B cell (primary cell): ENCODE measurements at regions of chr14 and their contacts with region 1.

Region 1: GRCh38 chr14:49867831-49868723 is 15.5 kb upstream of the NEMF start:
- DNase-seq: peak; percentile 98
- ATAC-seq: peak; percentile 87
- H3K4me3 ChIP-seq: peak overlapping the region; percentile 47 to 72 (median 62)
- H3K4me3 Mint-ChIP-seq: peak overlapping the region; percentile 91
- H3K27ac ChIP-seq: peak overlapping the region; percentile 89 to 96
- H3K27ac Mint-ChIP-seq: peak overlapping the region; percentile 99
- H3K4me1 ChIP-seq: peaks cover 60 to 66% of the 10 kb centered on the region in 2 donors
- H3K4me1 Mint-ChIP-seq: peaks cover 39% of the 10 kb centered on the region
- H3K27me3 ChIP-seq: no peaks in the 10 kb centered on the region
- H3K27me3 Mint-ChIP-seq: no peaks in the 10 kb centered on the region
- CTCF ChIP-seq: no peak

Region 2: GRCh38 chr14:49886523-49886922 is 18.4 kb after region 1 on chr14:
- CTCF ChIA-PET with region 1: interaction called, 49 read pairs
- POLR2A ChIA-PET with region 1: interaction called, 45 read pairs
- intact Hi-C with region 1: no loop called
- DNase-seq: no peak
- ATAC-seq: peak; percentile 21
- H3K4me3 ChIP-seq: no peak overlapping the region
- H3K4me3 Mint-ChIP-seq: peak overlapping the region; percentile 56
- H3K27ac ChIP-seq: no peak overlapping the region
- H3K27ac Mint-ChIP-seq: peak overlapping the region; percentile 58
- H3K4me1 ChIP-seq: peaks cover 12 to 14% of the 10 kb centered on the region in 2 donors
- H3K4me1 Mint-ChIP-seq: peaks cover 16% of the 10 kb centered on the region
- H3K27me3 ChIP-seq: no peaks in the 10 kb centered on the region
- H3K27me3 Mint-ChIP-seq: no peaks in the 10 kb centered on the region
- CTCF ChIP-seq: no peak

Region 3: GRCh38 chr14:49971156-49972130 is 103.4 kb after region 1 on chr14:
- CTCF ChIA-PET with region 1: interaction called, 23 read pairs
- POLR2A ChIA-PET with region 1: interaction called, 11 read pairs
- intact Hi-C with region 1: loop called (anchors 1 kb)
- DNase-seq: peak; percentile 92
- ATAC-seq: peak; percentile 85
- H3K4me3 ChIP-seq: peak overlapping the region in 2 of 5 experiments; percentile 30 to 32
- H3K4me3 Mint-ChIP-seq: peak overlapping the region; percentile 55
- H3K27ac ChIP-seq: peak overlapping the region; percentile 98 to 99
- H3K27ac Mint-ChIP-seq: peak overlapping the region; percentile 97
- H3K4me1 ChIP-seq: peaks cover 57 to 70% of the 10 kb centered on the region in 2 donors
- H3K4me1 Mint-ChIP-seq: peaks cover 62% of the 10 kb centered on the region
- H3K27me3 ChIP-seq: no peaks in the 10 kb centered on the region
- H3K27me3 Mint-ChIP-seq: no peaks in the 10 kb centered on the region
- CTCF ChIP-seq: no peak

Region 4: DNA sequence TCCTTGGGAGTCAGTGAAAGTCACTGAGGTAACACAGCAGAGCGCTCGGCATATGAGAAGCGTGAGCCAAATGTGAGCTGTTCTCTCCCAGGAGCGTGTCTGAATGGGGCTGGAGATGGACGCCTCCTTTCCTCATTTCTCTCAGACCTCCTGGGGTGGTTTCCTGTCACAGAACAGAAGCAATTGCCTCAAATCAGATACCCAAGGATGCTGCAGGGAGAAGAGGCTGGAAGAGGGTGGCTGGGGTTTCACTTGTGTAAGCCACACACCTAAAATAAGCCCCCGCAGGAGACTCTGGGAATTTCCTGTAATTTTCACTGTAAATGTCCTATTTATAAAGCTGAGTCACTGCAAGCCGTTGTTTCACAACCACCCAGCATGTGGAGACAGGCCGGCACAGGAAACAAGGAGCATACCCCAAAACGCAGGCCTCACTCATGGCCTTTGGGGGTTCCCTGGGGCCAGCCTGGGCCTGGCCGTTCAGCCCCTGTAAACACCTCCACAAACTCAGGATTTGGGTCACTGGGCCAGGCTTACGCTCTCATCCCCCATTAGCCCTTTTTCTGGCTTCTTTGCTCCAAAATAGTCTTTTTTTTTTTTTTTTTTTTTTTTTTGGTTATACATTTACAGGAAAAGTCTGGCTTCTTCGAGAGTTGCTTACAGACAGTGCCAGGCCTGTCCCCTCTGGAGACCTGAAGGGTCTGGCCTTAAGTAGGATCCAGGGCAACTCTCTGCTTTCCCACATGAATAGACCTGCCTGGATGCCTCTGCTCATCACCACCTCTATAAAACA is 193.0 kb after region 1 on chr14:
- CTCF ChIA-PET with region 1: interaction called, 89 read pairs
- POLR2A ChIA-PET with region 1: interaction called, 25 read pairs
- intact Hi-C with region 1: loop called (anchors 1 kb)
- DNase-seq: peak; percentile 34
- ATAC-seq: no peak
- H3K4me3 ChIP-seq: peak overlapping the region in 3 of 5 experiments; percentile 0 to 9 (median 2)
- H3K4me3 Mint-ChIP-seq: peak overlapping the region; percentile 95
- H3K27ac ChIP-seq: peak overlapping the region; percentile 92 to 96
- H3K27ac Mint-ChIP-seq: peak overlapping the region; percentile 100
- H3K4me1 ChIP-seq: peaks cover 60 to 82% of the 10 kb centered on the region in 2 donors
- H3K4me1 Mint-ChIP-seq: peaks cover 87% of the 10 kb centered on the region
- H3K27me3 ChIP-seq: no peaks in the 10 kb centered on the region
- H3K27me3 Mint-ChIP-seq: no peaks in the 10 kb centered on the region
- CTCF ChIP-seq: no peak

Region 5: GRCh38 chr14:50109342-50109741 is 241.3 kb after region 1 on chr14:
- CTCF ChIA-PET with region 1: interaction called, 182 read pairs
- POLR2A ChIA-PET with region 1: interaction called, 13 read pairs
- intact Hi-C with region 1: loop called (anchors 1 kb)
- DNase-seq: no peak
- ATAC-seq: no peak
- H3K4me3 ChIP-seq: no peak overlapping the region
- H3K4me3 Mint-ChIP-seq: no peak overlapping the region
- H3K27ac ChIP-seq: peak overlapping the region in 1 of 2 donors; percentile 85
- H3K27ac Mint-ChIP-seq: no peak overlapping the region
- H3K4me1 ChIP-seq: peaks cover 28 to 34% of the 10 kb centered on the region in 2 donors
- H3K4me1 Mint-ChIP-seq: peaks cover 40% of the 10 kb centered on the region
- H3K27me3 ChIP-seq: no peaks in the 10 kb centered on the region
- H3K27me3 Mint-ChIP-seq: no peaks in the 10 kb centered on the region
- CTCF ChIP-seq: no peak